ENCODE measurements at regions of chr6 and their contacts with region 1.

Region 1: DNA sequence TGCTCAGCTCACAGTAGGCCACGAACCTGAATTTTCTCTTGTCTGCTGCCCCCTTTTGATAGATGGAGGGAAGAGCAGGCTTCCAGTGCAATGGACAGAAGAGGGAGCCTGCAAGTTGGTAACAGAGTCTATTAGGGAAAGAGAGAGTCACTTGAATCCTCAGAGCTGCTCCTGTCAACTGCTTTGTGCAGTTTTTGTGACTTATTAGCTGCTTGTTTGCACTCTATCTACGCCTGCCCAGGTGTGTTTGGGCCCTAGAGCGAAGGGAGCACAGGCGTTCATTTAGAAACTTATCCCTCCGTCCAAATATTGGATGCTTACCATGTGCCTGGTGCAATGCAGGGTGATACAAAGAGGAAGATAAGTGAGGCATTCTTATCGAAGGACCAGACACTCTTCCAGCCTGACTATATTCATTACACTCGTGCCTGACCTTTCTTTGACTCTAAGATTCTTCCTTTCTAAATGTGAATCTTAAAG is 11.6 kb upstream of the SLC2A12 start:
- DNase-seq: peak; percentile 77
- H3K4me3 ChIP-seq: peak overlapping the region in 1 of 2 experiments; percentile 24; a peak in 1 of 4 replicates
- H3K27ac ChIP-seq: no peak overlapping the region
- H3K4me1 ChIP-seq: peaks cover 2 to 16% of the 10 kb centered on the region in 2 experiments; a peak in 2 of 4 replicates
- H3K27me3 ChIP-seq: no peaks in the 10 kb centered on the region
- CTCF ChIP-seq: peak; percentile 88
- EP300 ChIP-seq: no peak
- RAD21 ChIP-seq: peak; percentile 88

Region 2: GRCh38 chr6:133923938-133924593 is 139.9 kb before region 1 on chr6:
- CTCF ChIA-PET with region 1: interaction called, 197 read pairs
- POLR2A ChIA-PET with region 1: no interaction called
- DNase-seq: peak; percentile 62
- H3K4me3 ChIP-seq: no peak overlapping the region; a peak in 1 of 4 replicates
- H3K27ac ChIP-seq: no peak overlapping the region
- H3K4me1 ChIP-seq: no peaks in the 10 kb centered on the region
- H3K27me3 ChIP-seq: peaks cover 17% of the 10 kb centered on the region
- CTCF ChIP-seq: peak; percentile 90
- EP300 ChIP-seq: no peak
- RAD21 ChIP-seq: peak; percentile 98

Region 3: DNA sequence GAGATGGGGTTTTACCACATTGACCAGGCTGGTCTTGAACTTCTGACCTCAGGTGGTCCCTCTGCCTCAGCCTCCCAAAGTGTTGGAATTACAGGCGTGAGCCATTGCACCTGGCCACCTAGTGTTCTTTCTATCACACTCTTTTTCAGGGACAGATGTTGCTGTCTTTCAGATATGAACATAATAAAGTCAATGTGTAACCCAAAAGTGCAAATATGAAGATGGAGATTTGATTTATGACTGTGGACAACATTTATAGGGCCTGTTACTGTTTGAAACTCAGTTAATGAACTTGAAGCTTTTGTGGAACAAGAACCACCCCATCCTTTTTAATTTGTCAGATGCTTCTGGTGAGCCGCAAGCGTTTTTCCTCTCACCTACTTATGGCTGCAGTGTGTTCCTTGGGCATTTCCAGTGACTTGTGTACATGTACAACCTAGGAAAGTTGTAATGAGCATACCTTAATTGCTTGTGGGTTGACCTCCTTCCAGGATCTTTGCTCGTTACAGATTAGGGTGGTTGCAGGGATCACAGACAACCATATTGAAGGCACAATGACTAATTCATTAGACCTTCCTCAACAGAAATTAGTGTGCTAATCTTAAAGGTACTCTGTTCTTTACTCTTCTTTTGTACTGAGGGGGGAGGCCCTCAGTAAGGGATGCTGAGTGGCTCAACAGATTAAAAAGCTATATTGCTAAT is 104.2 kb before region 1 on chr6:
- CTCF ChIA-PET with region 1: interaction called, 42 read pairs
- POLR2A ChIA-PET with region 1: no interaction called
- DNase-seq: no peak
- H3K4me3 ChIP-seq: no peak overlapping the region
- H3K27ac ChIP-seq: no peak overlapping the region
- H3K4me1 ChIP-seq: peaks cover 13 to 16% of the 10 kb centered on the region in 2 experiments; a peak in 3 of 4 replicates
- H3K27me3 ChIP-seq: no peaks in the 10 kb centered on the region
- CTCF ChIP-seq: no peak
- EP300 ChIP-seq: no peak
- RAD21 ChIP-seq: no peak

Region 4: DNA sequence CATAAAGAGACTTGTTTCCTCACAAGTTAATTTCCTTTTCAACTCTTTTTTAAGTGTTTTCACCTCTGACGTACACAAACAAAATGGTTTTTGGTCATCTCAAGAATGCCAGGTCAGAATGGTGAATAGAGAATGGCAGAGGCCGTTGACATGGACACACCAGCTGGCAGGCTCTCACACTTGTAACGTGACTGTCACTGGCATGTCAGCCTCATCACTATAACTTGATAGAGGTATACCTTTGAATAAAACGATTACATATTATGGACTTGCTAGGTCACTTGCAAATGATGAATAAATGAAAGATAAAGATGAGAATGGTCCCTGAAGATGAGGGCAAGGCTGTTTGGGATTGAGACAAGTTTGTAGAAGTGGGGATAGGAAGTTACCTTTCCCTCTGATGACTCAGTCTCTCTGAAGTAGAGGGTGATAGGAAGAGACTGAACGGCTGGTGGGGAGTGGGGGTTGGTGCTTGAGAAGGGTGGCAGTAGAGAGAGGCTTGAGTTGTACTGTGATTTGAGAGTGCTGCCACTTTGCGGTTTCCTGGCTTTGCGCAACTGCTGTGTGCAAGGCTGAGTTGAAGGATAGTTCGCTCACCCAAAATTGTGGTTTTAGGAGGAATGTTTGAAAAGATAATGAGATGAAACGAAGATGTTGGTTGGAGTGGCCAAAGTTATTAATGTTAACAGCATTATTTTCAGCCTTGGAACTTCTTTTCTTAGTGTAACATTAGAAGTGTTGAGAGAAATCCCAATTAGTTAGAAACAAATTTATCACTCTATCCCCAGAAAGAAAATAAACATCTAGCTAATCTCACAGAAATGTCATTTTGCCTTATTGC is 80.7 kb before region 1 on chr6:
- CTCF ChIA-PET with region 1: interaction called, 21 read pairs
- POLR2A ChIA-PET with region 1: no interaction called
- DNase-seq: no peak
- H3K4me3 ChIP-seq: no peak overlapping the region
- H3K27ac ChIP-seq: no peak overlapping the region
- H3K4me1 ChIP-seq: peaks cover 0 to 7% of the 10 kb centered on the region in 2 experiments; a peak in 1 of 4 replicates
- H3K27me3 ChIP-seq: no peaks in the 10 kb centered on the region
- CTCF ChIP-seq: no peak
- EP300 ChIP-seq: no peak
- RAD21 ChIP-seq: no peak

Region 5: DNA sequence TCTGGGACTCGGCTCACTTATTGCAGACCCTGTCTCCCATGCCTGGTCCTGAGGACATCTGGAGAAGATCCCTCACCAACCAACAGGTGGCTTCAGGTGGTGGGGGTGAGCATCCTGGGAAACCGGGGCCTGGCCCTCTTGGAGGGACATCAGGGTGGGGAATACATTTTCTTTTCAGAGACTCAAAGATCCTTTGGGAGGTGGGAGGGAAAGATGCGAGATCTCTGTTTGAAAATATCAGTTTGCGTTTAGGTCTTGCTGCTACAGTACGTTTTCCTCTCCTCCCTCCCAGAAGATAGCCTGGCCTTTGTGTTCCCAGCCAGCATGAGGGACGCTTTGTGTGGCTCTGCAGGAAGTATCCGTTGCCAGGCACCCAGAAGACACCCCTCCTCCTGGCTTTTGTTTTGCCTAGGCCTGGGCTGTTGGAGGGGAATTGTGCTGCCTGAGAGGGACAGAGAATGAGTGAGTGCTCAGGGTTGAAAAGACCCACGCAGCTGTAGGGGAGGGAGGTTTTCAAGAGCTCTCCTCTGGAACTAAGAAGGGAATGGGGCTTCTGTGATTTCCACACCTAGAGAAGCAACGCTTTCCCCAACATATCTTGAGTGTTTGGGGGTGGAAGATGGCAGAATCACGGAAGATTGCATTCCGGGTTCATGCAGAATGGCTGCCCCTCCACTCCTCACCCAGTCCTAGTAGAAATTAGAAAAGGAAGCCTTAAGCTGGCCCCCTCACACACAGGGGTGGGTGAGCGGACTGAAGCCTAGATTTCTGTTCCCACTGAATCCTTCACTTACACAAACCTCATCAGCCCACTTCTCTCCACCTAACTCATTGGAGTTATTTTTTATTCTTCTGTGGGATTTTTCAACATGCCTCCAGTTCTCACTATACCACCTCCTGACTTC is 10.4 kb after region 1 on chr6:
- CTCF ChIA-PET with region 1: interaction called, 22 read pairs
- POLR2A ChIA-PET with region 1: no interaction called
- DNase-seq: no peak
- H3K4me3 ChIP-seq: no peak overlapping the region
- H3K27ac ChIP-seq: no peak overlapping the region
- H3K4me1 ChIP-seq: no peaks in the 10 kb centered on the region; a peak in 1 of 4 replicates
- H3K27me3 ChIP-seq: no peaks in the 10 kb centered on the region; the same call in 1 of the 2 replicates
- CTCF ChIP-seq: no peak
- EP300 ChIP-seq: no peak
- RAD21 ChIP-seq: no peak

Region 6: GRCh38 chr6:134097114-134097707 is 33.2 kb after region 1 on chr6:
- CTCF ChIA-PET with region 1: interaction called, 45 read pairs
- POLR2A ChIA-PET with region 1: no interaction called
- DNase-seq: peak; percentile 69
- H3K4me3 ChIP-seq: no peak overlapping the region; a peak in 1 of 4 replicates
- H3K27ac ChIP-seq: no peak overlapping the region
- H3K4me1 ChIP-seq: peaks cover 0 to 11% of the 10 kb centered on the region in 2 experiments; a peak in 2 of 4 replicates
- H3K27me3 ChIP-seq: peaks cover 10% of the 10 kb centered on the region; the same call in 1 of the 2 replicates
- CTCF ChIP-seq: peak; percentile 81
- EP300 ChIP-seq: no peak
- RAD21 ChIP-seq: peak; percentile 95

Region 7: DNA sequence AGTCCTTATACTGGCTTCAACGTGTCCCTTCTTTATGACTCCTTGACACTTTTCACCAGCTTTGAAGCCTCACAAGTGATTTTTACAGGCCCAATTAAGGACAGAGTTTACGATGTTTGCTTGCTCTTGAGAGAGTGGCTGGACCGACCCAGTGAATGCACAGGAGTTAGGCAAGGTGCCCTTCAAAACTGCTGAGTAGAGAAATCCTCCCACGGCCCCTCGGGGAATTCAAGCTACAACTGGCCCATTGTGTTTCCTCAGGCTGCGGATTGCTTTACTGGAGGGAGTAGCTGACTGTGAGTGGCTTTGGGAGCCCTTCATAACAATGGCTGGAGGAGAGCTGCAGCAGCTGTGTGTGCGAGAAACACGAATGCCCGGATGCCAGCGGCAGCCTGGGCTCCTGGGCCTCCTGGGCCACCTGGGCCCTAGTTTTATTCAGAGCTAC is 203.9 kb after region 1 on chr6:
- CTCF ChIA-PET with region 1: no interaction called
- POLR2A ChIA-PET with region 1: no interaction called
- DNase-seq: no peak
- H3K4me3 ChIP-seq: no peak overlapping the region
- H3K27ac ChIP-seq: no peak overlapping the region
- H3K4me1 ChIP-seq: no peaks in the 10 kb centered on the region
- H3K27me3 ChIP-seq: no peaks in the 10 kb centered on the region
- CTCF ChIP-seq: no peak
- EP300 ChIP-seq: no peak
- RAD21 ChIP-seq: no peak

Measured in SK-N-SH (cell line).